Naive thymus-derived CD4-positive, alpha-beta T cell (primary cell): ENCODE measurements at regions of chr7 and their contacts with region 1.

Region 1: DNA sequence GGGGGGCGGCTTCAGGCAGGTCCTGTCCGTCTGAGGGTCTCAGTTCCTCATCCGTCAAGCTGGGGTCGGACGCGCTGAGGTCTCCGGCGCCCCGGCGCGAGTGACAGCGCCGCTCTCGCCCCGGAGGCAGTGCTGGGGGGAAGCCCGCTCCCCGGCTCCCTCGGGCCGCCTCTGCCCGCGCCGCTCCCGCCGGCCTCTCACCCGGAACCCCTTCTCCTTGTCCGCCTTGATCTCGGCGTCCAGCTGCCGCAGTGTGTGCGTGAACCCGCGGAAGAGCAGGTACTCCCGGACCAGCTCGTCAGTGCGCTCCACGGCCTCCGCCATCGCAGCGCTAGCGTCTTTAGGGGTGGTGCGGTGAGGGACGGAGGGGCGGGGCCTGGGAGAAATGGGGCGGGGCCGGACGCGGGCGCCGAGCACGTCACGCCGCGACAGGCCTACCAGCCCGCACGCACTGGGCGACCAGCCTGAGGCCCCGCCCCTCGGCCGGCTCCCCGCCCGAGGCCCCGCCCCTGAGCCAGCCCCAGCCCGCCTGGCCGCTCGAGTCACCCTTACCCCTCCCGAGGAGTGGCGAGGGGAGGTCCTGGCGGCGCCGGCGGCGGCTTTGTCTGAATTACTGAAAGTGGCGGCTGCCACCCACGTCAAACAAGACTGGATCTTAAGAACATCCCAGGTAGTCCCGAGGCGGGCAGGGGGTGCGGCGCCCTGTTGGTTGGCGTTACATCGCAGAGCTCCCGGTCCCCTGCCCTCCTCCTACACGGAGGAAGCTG is at the start of gene WDR91:
- DNase-seq: peak; percentile 83 to 94 (median 90)
- ATAC-seq: peak; percentile 97
- H3K4me3 ChIP-seq: peak within 1 kb of the TSS; percentile 68
- H3K4me3 Mint-ChIP-seq: peak within 1 kb of the TSS; percentile 91 to 99 (median 96)
- H3K27ac ChIP-seq: peak within 1 kb of the TSS; percentile 92
- H3K27ac Mint-ChIP-seq: peak within 1 kb of the TSS; percentile 94 to 99 (median 98)
- H3K4me1 ChIP-seq: peaks cover 0 to 5% of the 10 kb centered on the region in 2 donors
- H3K4me1 Mint-ChIP-seq: peaks cover 18 to 47% (median 37%) of the 10 kb centered on the region in 7 donors
- H3K27me3 ChIP-seq: no peaks in the 10 kb centered on the region
- H3K27me3 Mint-ChIP-seq: peaks cover 0 to 2% (median 0%) of the 10 kb centered on the region in 5 donors
- total RNA-seq, gene WDR91: 18.2 to 59.2 (median 37.0) TPM

Region 2: DNA sequence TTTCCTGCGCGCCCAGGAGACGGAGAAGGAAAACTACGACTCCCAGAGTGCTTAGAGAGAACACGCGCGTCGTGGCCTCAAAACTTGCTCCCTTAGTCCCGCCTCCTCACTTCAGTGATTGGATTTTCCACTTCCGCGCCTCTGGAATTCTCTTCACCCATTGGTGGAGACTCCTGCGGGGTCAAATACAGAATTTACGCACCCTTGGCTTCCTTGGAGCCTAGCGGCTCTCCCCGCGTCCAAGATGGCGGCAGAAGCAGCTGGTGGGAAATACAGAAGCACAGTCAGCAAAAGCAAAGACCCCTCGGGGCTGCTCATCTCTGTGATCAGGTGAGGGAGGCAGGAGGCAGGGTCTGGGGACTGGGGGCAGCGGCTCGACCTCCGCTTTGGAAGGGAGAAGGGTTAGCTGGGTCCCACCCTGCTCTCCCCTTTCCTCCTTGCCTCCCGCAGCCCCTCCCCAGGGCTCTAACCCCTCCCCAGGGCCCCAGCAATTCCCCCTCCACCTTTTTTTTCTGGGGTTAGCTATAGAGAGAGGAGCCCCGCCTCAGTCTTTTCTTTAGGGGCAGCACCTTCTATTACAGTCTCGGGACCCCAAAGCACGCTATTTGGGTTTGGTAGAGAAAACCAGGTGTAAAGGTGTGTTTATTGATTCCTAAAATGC is 1958.4 kb before region 1 on chr7 and contains the start of gene EXOC4:
- CTCF ChIA-PET with region 1: no interaction called
- POLR2A ChIA-PET with region 1: no interaction called
- intact Hi-C with region 1: loop called in 1 of 2 experiments (anchors 5 kb)
- DNase-seq: peak; percentile 66 to 97 (median 95)
- ATAC-seq: peak; percentile 100
- H3K4me3 ChIP-seq: peak within 1 kb of the TSS; percentile 87
- H3K4me3 Mint-ChIP-seq: peak within 1 kb of the TSS; percentile 85 to 99 (median 96)
- H3K27ac ChIP-seq: peak within 1 kb of the TSS; percentile 93
- H3K27ac Mint-ChIP-seq: peak within 1 kb of the TSS; percentile 94 to 98 (median 96)
- H3K4me1 ChIP-seq: peaks cover 4 to 7% of the 10 kb centered on the region in 2 donors
- H3K4me1 Mint-ChIP-seq: peaks cover 22 to 45% (median 40%) of the 10 kb centered on the region in 7 donors
- H3K27me3 ChIP-seq: no peaks in the 10 kb centered on the region
- H3K27me3 Mint-ChIP-seq: peaks cover 0 to 9% (median 0%) of the 10 kb centered on the region in 5 donors
- total RNA-seq, gene EXOC4: 65.4 to 106 (median 82.9) TPM

Region 3: DNA sequence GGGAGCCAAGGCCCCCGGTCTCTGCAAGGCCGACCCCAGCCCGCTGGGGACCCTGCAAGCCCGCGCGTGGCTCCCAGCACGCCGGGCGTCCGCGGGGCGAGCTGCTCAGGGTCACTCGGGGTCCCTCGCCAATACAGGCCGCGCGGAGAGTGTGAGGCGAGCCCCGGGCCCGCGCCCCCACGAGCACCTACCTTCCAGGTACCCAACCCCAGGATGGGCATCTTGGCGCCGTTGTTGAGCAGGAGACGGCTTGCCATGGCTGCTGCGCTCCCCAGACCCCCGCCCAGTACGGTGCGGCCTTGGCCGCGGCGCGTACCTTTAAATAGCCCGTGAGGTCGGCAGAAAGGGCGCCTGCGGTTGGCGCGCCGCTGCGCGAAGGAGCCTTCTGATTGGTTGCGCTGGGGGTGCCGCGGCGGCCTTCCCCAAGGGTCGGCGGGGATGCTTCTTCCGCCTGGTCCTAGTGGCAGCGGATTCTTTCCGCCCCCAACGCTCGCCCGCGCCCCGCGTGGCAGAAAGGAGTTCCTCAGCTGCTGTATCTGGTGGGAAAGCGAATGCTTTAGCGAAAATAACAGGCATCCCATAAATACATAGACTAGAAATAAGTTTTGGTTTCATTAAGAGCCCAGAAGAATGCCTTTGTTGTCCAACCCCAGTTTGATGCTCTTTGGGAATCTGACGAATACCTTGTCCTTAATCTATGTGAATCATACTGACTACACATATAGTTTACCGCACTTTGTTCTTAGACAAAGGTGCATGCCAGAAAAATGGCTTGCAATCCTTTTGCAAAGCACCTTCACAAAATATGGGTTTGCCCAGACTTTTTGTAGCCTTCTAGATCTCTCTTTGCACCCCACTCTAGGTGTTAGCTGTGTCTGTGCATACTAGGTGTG is 752.3 kb before region 1 on chr7 and contains the start of gene AKR1B1:
- CTCF ChIA-PET with region 1: no interaction called
- POLR2A ChIA-PET with region 1: no interaction called
- intact Hi-C with region 1: loop called (anchors 1 to 2 kb)
- DNase-seq: peak; percentile 76 to 88 (median 84)
- ATAC-seq: peak; percentile 94
- H3K4me3 ChIP-seq: peak within 1 kb of the TSS; percentile 78
- H3K4me3 Mint-ChIP-seq: peak within 1 kb of the TSS; percentile 71 to 94 (median 89)
- H3K27ac ChIP-seq: peak within 1 kb of the TSS; percentile 72
- H3K27ac Mint-ChIP-seq: peak within 1 kb of the TSS; percentile 80 to 92 (median 84)
- H3K4me1 ChIP-seq: peaks cover 20 to 30% of the 10 kb centered on the region in 2 donors
- H3K4me1 Mint-ChIP-seq: peaks cover 30 to 55% (median 48%) of the 10 kb centered on the region in 7 donors
- H3K27me3 ChIP-seq: no peaks in the 10 kb centered on the region
- H3K27me3 Mint-ChIP-seq: no peaks in the 10 kb centered on the region
- total RNA-seq, gene AKR1B1: 62.2 to 108 (median 100) TPM

Region 4: DNA sequence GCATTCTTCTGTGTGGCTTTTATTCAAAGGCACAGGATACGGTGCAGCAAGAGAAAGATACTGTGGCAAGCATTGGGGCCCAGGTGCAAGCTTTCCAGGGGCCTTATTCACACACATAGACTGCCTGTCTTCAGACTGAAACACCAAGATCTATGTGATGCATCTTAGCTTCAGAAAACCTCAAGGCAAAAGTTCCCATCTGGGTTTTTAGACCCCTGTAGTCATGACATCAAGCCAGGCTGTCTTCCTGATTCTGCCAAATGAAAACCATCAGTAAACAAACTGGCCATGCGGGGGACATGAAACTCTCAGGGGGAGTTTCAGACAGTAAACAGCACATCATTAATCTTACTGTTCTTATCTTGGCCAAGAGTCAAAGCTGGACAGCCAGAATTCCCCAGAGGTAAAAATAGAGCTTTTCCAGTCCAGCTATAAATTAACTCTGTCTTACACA is 215.2 kb before region 1 on chr7:
- CTCF ChIA-PET with region 1: no interaction called
- POLR2A ChIA-PET with region 1: no interaction called
- intact Hi-C with region 1: loop called in 1 of 2 experiments (anchors 2 kb)
- DNase-seq: peak in 5 of 9 donors; percentile 13 to 45 (median 30)
- ATAC-seq: peak; percentile 51
- H3K4me3 ChIP-seq: no peak overlapping the region
- H3K4me3 Mint-ChIP-seq: peak overlapping the region in 8 of 10 donors; percentile 52 to 79 (median 66)
- H3K27ac ChIP-seq: peak overlapping the region; percentile 76
- H3K27ac Mint-ChIP-seq: peak overlapping the region in 8 of 9 donors; percentile 89 to 96 (median 94)
- H3K4me1 ChIP-seq: peaks cover 6 to 47% of the 10 kb centered on the region in 2 donors
- H3K4me1 Mint-ChIP-seq: peaks cover 9 to 72% (median 67%) of the 10 kb centered on the region in 7 donors
- H3K27me3 ChIP-seq: no peaks in the 10 kb centered on the region
- H3K27me3 Mint-ChIP-seq: no peaks in the 10 kb centered on the region

Region 5: DNA sequence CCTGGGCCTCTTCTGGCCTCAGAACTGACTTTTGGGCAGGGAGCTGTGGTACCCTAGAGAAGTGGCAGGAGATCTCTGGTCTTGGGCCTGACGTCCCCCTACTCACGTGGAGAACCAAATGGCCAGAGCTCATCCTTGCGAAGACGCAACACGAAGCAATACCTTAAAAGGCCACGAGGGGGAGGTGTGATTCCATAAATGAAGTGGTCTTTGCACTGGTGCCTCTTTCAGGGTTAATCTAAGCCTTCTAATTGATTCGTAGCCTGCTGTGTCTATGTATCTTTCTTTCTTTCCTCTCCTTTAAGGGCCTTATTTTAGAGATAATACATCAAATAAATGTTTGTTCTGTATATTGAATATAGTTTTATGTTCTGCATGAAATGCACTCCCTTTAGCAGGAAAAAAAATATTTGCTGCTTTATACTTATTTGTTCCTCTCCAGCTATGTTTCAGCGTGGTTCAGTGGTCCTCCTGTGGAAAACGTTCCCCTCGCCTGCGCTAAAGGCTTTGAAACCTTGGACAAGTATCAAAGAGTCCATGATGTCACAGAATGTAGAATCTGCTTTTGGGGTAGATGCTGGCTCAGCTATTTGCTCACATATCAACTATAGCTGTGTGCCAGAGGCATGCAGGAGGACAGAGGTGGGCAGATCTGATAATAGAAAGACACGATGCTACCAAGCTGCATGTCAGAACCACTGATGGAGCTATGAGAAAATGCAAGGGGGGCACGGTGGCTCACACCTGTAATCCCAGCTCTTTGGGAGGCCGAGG is 63.3 kb after region 1 on chr7:
- CTCF ChIA-PET with region 1: no interaction called
- POLR2A ChIA-PET with region 1: no interaction called
- intact Hi-C with region 1: loop called in 1 of 2 experiments (anchors 2 kb)
- DNase-seq: peak; percentile 27 to 74 (median 55)
- ATAC-seq: peak; percentile 81
- H3K4me3 ChIP-seq: no peak overlapping the region
- H3K4me3 Mint-ChIP-seq: no peak overlapping the region
- H3K27ac ChIP-seq: no peak overlapping the region
- H3K27ac Mint-ChIP-seq: no peak overlapping the region
- H3K4me1 ChIP-seq: no peaks in the 10 kb centered on the region
- H3K4me1 Mint-ChIP-seq: peaks cover 0 to 4% (median 0%) of the 10 kb centered on the region in 7 donors
- H3K27me3 ChIP-seq: no peaks in the 10 kb centered on the region
- H3K27me3 Mint-ChIP-seq: peaks cover 0 to 8% (median 4%) of the 10 kb centered on the region in 5 donors

Region 6: DNA sequence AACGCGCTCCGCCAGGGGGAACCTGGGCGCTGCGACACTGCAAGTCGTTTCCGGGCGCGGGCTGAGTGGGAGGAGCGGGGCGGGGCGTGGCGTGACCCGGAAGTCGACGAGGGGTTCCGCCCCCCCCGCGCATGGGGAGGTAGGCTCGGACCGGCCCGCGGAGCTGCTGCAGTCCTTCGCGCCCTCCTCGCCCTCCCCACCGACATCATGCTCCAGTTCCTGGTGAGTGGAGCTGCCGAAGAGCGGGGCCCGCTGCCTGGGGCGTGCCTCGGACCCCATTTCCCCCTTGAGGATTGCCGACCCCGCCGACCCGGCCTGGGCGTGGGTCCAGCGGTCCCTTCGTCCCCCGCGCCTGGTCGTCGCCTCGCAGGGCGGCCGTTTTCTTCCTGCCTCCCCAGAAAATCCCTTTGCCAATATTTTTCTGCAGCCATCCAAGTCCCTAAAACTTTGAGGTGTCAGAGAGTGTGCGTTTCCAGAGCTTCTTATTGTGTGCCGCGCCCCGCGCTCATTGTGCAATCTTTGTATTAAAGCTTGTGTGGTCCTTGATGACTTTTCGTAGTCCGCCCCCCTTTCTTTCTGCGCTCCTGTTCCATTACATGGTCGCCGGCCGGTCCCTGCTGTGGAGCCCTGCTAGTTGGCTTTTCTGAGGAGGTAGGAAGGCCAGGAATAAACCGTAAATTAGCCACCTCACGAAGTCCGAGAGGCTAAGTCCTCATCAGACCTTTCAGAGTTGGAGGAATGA is 451.2 kb after region 1 on chr7 and contains the start of gene STMP1:
- CTCF ChIA-PET with region 1: no interaction called
- POLR2A ChIA-PET with region 1: no interaction called
- intact Hi-C with region 1: loop called (anchors 1 kb)
- DNase-seq: peak; percentile 89 to 97 (median 94)
- ATAC-seq: peak; percentile 99
- H3K4me3 ChIP-seq: peak within 1 kb of the TSS; percentile 91
- H3K4me3 Mint-ChIP-seq: peak within 1 kb of the TSS; percentile 86 to 98 (median 94)
- H3K27ac ChIP-seq: peak within 1 kb of the TSS; percentile 82
- H3K27ac Mint-ChIP-seq: peak within 1 kb of the TSS; percentile 80 to 95 (median 93)
- H3K4me1 ChIP-seq: peaks cover 6 to 15% of the 10 kb centered on the region in 2 donors
- H3K4me1 Mint-ChIP-seq: peaks cover 32 to 49% (median 43%) of the 10 kb centered on the region in 7 donors
- H3K27me3 ChIP-seq: no peaks in the 10 kb centered on the region
- H3K27me3 Mint-ChIP-seq: no peaks in the 10 kb centered on the region
- total RNA-seq, gene STMP1: 18.0 to 33.0 (median 24.7) TPM

Region 7: DNA sequence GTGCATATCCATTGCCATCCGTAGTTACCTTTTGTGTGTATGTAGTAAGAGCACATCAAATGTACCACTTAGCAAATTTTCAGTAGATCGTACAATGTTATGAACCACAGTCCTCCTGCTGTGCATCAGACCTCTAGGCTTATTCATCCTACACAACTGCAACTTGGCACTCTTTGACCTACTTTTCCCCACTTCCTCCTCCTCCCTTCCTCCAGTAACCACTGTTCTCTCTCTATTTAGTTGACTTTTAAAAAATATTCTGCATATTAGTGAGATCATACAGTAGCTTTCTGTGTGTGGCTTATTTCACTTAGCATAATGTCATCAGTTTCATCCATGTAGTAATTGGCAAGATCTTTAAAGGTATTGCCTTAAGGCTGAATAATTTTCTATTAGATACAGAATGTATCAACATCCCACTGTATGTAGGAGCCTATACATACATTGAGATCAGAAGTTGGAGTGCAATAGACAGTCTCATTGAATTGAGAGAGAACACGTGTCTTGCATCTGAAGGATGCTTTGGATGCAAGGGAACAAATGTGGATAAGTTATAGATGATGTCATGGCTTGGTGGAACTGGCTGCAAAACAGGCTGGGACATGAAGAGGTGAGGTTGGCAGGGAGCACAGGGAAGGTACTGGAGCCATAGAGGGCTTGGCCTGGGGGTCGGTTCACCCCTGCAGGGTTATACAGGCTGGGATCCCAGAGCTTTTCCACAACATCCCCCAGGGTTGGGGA is 620.3 kb after region 1 on chr7:
- CTCF ChIA-PET with region 1: no interaction called
- POLR2A ChIA-PET with region 1: no interaction called
- intact Hi-C with region 1: no loop called
- DNase-seq: no peak
- ATAC-seq: peak; percentile 54
- H3K4me3 ChIP-seq: no peak overlapping the region
- H3K4me3 Mint-ChIP-seq: peak overlapping the region in 1 of 10 donors; percentile 18
- H3K27ac ChIP-seq: no peak overlapping the region
- H3K27ac Mint-ChIP-seq: peak overlapping the region in 1 of 9 donors; percentile 4
- H3K4me1 ChIP-seq: peaks cover 0 to 13% of the 10 kb centered on the region in 2 donors
- H3K4me1 Mint-ChIP-seq: peaks cover 0 to 14% (median 6%) of the 10 kb centered on the region in 7 donors
- H3K27me3 ChIP-seq: no peaks in the 10 kb centered on the region
- H3K27me3 Mint-ChIP-seq: peaks cover 0 to 11% (median 0%) of the 10 kb centered on the region in 5 donors